Activated CD4-positive, alpha-beta T cell treated with anti-CD3 and anti-CD28 coated beads, Interleukin-2, amount 10 ng/mL, durations not matched to agents 24 days and 14 days (primary cell): ENCODE measurements at regions of chr4 and their contacts with region 1.

Region 1: DNA sequence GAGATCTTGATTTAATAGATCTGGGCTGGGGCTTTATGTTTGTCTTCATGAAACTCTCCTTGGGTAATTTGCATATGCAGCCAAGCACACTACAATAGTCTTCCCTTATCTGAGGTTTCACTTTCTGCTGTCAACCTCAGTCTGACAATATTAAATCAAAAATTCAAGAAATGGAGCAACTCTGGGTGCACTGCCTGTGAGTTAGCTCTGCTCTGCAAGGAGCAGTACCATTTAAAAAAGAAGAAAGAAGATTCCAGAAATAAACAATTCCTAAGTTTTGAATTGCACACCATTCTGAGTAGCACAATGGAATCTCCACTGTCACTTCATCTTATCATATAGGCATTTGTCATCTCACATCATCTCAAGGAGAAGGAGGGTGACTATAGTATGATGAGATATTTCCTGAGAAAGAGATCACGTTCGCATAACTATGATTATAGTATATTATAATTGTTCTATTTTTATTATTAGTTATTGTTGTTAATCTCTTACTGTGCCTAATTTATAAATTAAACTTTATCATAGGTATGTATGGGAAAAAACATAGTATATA is 9.4 kb downstream of the FNIP2 start:
- DNase-seq: peak; percentile 67
- H3K4me3 Mint-ChIP-seq: peak overlapping the region; percentile 76
- H3K27ac Mint-ChIP-seq: peak overlapping the region; percentile 74
- H3K4me1 Mint-ChIP-seq: peaks cover 42% of the 10 kb centered on the region
- H3K27me3 Mint-ChIP-seq: no peaks in the 10 kb centered on the region

Region 2: GRCh38 chr4:158809611-158810486 is 31.6 kb after region 1 on chr4:
- intact Hi-C with region 1: loop called (anchors 2 kb)
- DNase-seq: peak; percentile 70
- H3K4me3 Mint-ChIP-seq: peak overlapping the region; percentile 70
- H3K27ac Mint-ChIP-seq: peak overlapping the region; percentile 87
- H3K4me1 Mint-ChIP-seq: peaks cover 53% of the 10 kb centered on the region
- H3K27me3 Mint-ChIP-seq: no peaks in the 10 kb centered on the region

Region 3: GRCh38 chr4:158817562-158818296 is 39.5 kb after region 1 on chr4:
- intact Hi-C with region 1: loop called (anchors 2 kb)
- DNase-seq: peak; percentile 55
- H3K4me3 Mint-ChIP-seq: peak overlapping the region; percentile 12
- H3K27ac Mint-ChIP-seq: peak overlapping the region; percentile 87
- H3K4me1 Mint-ChIP-seq: peaks cover 58% of the 10 kb centered on the region
- H3K27me3 Mint-ChIP-seq: no peaks in the 10 kb centered on the region